ENCODE measurements at regions of chr17 and their contacts with region 1.

Region 1: DNA sequence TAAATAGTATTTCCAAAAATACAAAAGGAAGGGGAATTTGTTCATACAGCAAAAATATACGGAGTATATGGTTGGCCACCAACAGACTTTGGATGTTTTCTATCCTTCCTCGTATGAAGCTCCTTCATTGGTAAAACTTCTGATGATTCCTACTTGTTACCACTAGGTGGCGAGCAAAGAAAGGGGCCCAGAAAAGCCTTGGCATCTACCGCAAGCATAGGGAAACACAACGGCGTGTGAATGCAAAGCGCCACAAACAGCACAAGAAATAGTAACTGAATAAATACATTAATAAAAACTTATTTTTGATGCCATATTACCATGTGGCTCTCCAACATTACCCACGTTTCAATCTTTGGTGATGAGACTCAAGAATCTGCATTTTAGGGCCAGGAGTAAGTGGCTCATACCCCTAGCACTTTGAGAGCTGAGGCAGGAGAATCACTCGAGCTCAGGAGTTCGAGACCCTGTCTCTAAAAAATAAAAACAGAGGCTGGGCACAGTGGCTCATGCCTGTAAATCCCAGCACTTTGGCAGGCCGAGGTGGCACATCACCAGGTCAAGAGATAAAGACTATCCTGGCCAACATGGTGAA is 34.5 kb downstream of the YWHAE start:
- DNase-seq: peak; percentile 20
- H3K4me3 ChIP-seq: no peak overlapping the region
- H3K27me3 ChIP-seq: no peaks in the 10 kb centered on the region
- CTCF ChIP-seq: peak; percentile 86

Region 2: GRCh38 chr17:1379930-1380313 is 14.4 kb after region 1 on chr17:
- CTCF ChIA-PET with region 1: interaction called, 53 read pairs
- POLR2A ChIA-PET with region 1: no interaction called
- DNase-seq: no peak
- H3K4me3 ChIP-seq: no peak overlapping the region
- H3K27me3 ChIP-seq: no peaks in the 10 kb centered on the region
- CTCF ChIP-seq: no peak

Region 3: DNA sequence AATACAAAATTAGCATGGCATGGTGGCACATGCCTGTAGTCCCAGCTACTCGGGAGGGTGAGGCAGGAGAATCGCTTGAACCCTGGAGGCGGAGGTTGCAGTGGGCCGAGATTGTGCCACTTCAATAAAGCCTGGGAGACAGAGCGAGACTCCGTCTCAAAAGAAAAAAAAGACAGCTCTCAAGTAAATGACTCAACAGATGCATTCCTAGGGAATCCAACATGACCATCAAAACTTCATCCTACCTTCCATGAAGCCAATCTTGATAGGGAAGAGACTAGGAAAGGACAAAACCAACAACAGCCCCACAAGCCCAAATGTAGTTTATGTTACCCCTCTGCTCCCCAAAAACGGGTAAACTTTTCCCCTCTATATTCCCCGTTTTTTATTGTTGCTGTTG is 30.7 kb after region 1 on chr17:
- CTCF ChIA-PET with region 1: interaction called, 17 read pairs
- POLR2A ChIA-PET with region 1: interaction called, 3 read pairs
- DNase-seq: no peak
- H3K4me3 ChIP-seq: no peak overlapping the region
- H3K27me3 ChIP-seq: no peaks in the 10 kb centered on the region
- CTCF ChIP-seq: no peak

Region 4: DNA sequence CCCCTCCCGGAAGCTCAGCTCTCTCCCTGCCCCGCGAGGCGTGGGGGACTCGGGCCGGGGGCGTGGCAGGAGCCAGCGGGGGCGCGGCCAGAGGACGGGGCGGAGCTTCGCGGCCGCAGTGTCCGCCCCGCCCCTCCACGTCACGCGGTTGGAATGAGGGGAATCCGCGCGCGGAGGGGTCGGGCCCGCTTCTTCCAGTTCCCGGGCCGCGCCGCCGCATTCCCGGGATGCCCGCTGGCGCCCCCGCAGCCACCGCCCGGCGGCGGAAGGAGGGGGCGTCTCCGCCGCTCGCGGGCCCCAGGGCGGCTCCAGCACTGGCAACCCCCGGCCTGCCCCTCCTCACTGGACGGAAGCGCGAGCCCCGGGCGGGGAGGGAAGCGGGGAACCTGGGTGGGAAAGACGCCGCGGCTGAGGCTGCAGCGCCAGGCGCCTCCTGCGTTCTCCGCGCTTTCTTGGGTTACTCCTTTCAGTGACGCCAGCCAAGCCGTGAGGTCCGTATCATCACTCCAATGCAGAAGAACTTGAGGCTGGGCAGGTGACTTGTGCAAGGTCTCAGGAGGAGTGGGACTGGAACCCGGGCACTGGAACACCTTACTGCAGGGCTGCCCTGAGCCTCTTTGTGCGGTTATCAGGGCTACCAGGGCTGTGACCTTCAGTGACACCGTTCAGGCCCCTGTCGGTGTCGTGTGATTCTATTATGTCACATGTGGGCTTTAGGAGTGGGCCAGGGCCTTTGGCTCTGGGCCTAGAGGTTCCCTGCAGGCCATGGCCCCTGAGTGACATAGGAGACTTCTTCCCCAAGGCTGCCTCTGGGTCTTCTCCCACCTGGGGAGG is 122.7 kb after region 1 on chr17:
- CTCF ChIA-PET with region 1: interaction called, 12 read pairs
- POLR2A ChIA-PET with region 1: no interaction called
- DNase-seq: peak; percentile 56
- H3K4me3 ChIP-seq: peak overlapping the region; percentile 52
- H3K27me3 ChIP-seq: no peaks in the 10 kb centered on the region
- CTCF ChIP-seq: no peak

Measured in BJ (cell line).